Posterior cingulate gyrus (tissue), 11 donors: ENCODE measurements at regions of chr14 and their contacts with region 1.

Region 1: GRCh38 chr14:23120541-23121251 is 1.6 kb upstream of the CEBPE start:
- DNase-seq: peak; percentile 81 to 98 (median 90)

Region 2: GRCh38 chr14:23160924-23161538 is 40.3 kb after region 1 on chr14:
- intact Hi-C with region 1: no loop called
- DNase-seq: peak in 4 of 10 donors; percentile 32 to 88 (median 68)

Region 3: GRCh38 chr14:23186913-23187654 is 66.4 kb after region 1 on chr14:
- intact Hi-C with region 1: loop called (anchors 1 kb)
- DNase-seq: peak in 2 of 10 donors; percentile 28 to 42

Region 4: DNA sequence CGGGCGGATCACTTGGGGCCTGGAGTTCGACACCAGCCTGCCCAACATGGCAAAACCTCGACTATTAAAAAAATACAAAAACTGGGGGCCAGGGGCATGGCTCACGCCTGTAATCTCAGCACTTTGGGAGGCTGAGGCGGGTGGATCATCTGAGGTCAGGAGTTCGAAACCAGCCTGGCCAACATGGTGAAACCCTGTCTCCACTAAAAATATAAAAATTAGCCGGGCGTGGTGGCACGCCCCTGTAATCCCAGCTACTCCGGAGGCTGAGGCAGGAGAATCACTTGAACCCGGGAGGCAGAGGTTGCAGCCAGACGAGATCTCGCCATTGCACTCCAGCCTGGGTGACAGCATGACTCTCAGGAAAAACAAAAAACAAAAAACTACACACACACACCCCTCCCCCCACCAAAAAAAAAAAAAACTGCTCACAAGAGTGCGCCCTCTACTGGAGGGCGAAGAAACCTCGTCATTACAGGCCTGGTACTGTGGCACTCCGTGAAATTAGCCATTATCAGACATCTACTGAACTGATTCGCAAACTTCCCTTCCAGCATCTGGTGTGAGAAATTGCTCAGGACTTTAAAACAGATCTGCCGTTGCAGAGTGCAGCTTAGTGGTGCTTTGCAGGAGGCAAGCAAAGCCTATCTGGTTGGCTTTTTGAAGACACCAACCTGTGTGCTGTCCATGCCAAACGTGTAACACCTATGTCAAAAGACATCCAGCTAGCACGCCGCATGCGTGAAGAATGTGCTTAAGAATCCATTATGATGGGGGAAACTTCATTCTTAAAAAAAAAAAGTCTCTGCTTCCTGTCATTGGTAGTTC is 174.3 kb after region 1 on chr14:
- intact Hi-C with region 1: loop called (anchors 5 kb)
- DNase-seq: peak in 2 of 10 donors; percentile 29 to 46